Activated B cell treated with CpG ODN at 0.5 μM for 24 hours (primary cell): ENCODE measurements at regions of chr7 and their contacts with region 1.

Region 1: DNA sequence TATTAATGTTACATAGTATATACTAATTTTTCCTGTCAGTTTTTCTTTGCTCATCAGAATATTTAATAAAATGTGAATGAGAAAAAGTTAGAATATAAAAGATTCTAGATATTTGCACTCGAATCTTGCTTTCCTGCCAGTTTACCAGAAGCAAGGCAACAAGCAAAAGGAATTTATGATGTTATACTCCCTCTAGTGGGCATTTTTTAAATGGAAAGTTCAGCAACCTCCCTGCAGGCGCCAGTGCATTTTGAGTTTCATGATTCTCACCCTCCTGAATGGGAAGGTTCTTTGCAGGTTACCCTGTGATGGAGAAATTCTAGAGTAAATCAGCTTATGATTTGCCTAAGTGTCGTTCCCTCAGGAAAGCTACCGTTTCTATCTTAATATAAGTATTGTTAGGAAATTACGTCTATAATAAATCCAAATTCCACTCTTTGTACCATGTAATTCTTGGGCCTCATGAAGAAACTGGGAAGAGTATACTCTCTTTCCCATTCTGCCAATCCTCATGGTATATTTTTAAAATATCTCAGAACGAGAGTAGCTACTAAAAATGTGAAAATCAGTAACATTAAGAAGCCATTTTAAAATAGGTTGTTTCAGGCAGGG is 350.0 kb downstream of the CRPPA start:
- DNase-seq: no peak
- ATAC-seq: no peak
- H3K4me3 Mint-ChIP-seq: no peak overlapping the region
- H3K27ac Mint-ChIP-seq: no peak overlapping the region
- H3K4me1 Mint-ChIP-seq: no peaks in the 10 kb centered on the region
- H3K27me3 Mint-ChIP-seq: no peaks in the 10 kb centered on the region
- CTCF ChIP-seq: peak; percentile 75

Region 2: GRCh38 chr7:14691597-14692203 is 1379.7 kb before region 1 on chr7:
- CTCF ChIA-PET with region 1: no interaction called
- POLR2A ChIA-PET with region 1: no interaction called
- intact Hi-C with region 1: loop called (anchors 10 kb)
- DNase-seq: no peak
- ATAC-seq: peak; percentile 64
- H3K4me3 Mint-ChIP-seq: no peak overlapping the region
- H3K27ac Mint-ChIP-seq: no peak overlapping the region
- H3K4me1 Mint-ChIP-seq: no peaks in the 10 kb centered on the region
- H3K27me3 Mint-ChIP-seq: no peaks in the 10 kb centered on the region
- CTCF ChIP-seq: peak; percentile 53

Region 3: DNA sequence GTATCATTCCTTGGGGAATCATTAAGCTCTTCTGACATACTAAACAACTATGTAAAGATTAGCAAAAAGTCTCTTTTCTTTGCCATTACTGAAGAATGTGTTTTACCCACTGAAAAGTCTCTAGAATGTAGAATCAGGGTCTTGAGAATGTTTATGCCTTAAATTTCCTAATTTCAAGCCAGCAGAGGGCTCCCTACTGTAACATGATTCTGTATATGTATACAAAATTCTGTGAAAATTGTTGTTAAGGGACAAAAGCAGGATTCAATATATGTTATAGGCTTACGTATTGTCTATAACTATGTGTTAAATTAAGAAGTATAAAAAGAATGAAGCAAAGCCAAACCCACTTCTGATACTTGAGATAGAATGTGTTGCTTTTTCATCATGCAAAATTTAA is 871.9 kb before region 1 on chr7:
- CTCF ChIA-PET with region 1: no interaction called
- POLR2A ChIA-PET with region 1: no interaction called
- intact Hi-C with region 1: loop called (anchors 1 kb)
- DNase-seq: no peak
- ATAC-seq: no peak
- H3K4me3 Mint-ChIP-seq: no peak overlapping the region
- H3K27ac Mint-ChIP-seq: no peak overlapping the region
- H3K4me1 Mint-ChIP-seq: no peaks in the 10 kb centered on the region
- H3K27me3 Mint-ChIP-seq: no peaks in the 10 kb centered on the region
- CTCF ChIP-seq: no peak

Region 4: DNA sequence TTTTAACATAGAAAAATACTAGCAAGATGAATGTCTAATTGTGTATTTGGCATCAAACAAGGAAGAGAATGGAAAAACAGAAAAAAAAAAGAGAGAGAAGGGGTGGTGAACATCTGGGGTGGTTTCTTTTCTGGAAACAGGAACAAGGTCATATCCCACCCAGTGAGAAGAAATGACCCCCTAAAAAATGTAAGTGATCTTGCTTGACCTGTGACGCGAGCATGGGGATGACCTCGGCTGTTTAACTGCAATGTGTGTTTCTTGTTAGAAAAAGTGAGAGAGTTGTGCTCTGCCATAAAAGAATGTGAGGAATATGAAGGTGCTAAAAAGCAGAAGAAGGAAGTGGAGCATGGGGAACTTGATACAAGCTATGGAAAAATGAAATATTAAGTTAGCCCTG is 768.0 kb before region 1 on chr7:
- CTCF ChIA-PET with region 1: no interaction called
- POLR2A ChIA-PET with region 1: no interaction called
- intact Hi-C with region 1: loop called (anchors 5 kb)
- DNase-seq: no peak
- ATAC-seq: no peak
- H3K4me3 Mint-ChIP-seq: no peak overlapping the region
- H3K27ac Mint-ChIP-seq: no peak overlapping the region
- H3K4me1 Mint-ChIP-seq: no peaks in the 10 kb centered on the region
- H3K27me3 Mint-ChIP-seq: no peaks in the 10 kb centered on the region
- CTCF ChIP-seq: no peak

Region 5: DNA sequence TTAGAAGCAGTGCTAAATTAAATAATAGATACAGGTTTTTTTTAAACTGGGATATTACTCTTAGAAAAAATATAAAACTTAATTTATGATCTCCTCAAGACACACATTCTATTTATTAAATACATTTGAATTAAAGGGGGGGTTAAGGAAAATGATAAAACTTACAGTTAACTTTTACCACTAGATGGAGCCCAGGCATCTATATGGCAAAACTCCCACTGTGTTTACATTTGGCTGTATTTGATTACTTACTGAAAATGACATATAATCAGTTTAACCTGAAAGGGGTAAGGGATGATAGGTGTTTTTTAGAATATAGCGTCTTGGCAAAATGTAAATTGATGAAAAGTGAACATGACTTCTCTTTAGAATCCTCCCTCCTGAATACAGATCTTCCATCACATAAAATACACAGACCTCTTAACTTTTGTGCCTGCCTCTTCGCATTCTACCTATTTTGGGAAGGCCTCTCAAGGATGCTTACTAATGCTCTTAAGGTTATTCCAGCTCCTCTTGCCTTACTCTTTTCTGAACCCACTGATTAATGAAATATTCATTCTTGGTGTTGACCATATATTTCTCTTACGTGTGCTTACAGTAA is 745.2 kb before region 1 on chr7:
- CTCF ChIA-PET with region 1: no interaction called
- POLR2A ChIA-PET with region 1: no interaction called
- intact Hi-C with region 1: loop called (anchors 1 kb)
- DNase-seq: no peak
- ATAC-seq: no peak
- H3K4me3 Mint-ChIP-seq: no peak overlapping the region
- H3K27ac Mint-ChIP-seq: no peak overlapping the region
- H3K4me1 Mint-ChIP-seq: no peaks in the 10 kb centered on the region
- H3K27me3 Mint-ChIP-seq: no peaks in the 10 kb centered on the region
- CTCF ChIP-seq: no peak

Region 6: DNA sequence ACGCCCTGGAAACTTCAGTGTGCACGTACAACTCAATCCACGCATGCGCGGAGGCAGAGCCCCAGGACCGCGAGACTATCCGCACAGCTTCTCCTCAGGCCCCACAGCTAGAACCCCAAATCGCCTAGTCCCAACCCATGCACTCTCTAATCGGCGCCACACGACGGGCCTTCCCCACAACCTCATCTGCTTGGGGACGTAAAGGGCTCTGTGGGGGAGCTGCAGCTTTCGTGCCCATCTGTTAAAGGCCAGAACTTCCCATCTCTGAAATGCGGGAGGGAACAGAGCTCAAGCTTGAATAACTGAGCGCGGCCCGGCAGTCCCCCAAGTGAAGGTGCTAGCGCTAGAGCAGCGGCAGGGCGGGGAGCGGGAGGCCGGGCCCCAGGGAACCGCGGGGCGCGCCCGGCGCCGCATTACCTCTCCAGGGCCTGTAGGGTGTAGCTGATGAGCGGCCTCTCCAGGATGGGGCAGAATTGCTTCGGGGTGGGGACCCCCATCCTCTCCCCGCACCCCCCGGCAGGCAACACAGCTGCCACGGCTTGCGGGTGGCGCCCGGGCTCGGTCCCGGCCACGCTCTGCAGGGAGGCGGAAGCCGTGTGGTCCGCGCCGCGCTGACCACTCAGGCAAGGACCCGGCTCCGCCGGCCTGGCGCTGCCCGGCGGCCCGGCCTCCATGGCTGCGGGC is 349.4 kb after region 1 on chr7:
- CTCF ChIA-PET with region 1: no interaction called
- POLR2A ChIA-PET with region 1: no interaction called
- intact Hi-C with region 1: loop called (anchors 10 kb)
- DNase-seq: peak; percentile 73
- ATAC-seq: peak; percentile 90
- H3K4me3 Mint-ChIP-seq: peak overlapping the region; percentile 93
- H3K27ac Mint-ChIP-seq: peak overlapping the region; percentile 95
- H3K4me1 Mint-ChIP-seq: peaks cover 22% of the 10 kb centered on the region
- H3K27me3 Mint-ChIP-seq: no peaks in the 10 kb centered on the region
- CTCF ChIP-seq: no peak

Region 7: GRCh38 chr7:17448486-17449423 is 1377.4 kb after region 1 on chr7:
- CTCF ChIA-PET with region 1: no interaction called
- POLR2A ChIA-PET with region 1: no interaction called
- intact Hi-C with region 1: no loop called
- DNase-seq: no peak
- ATAC-seq: no peak
- H3K4me3 Mint-ChIP-seq: no peak overlapping the region
- H3K27ac Mint-ChIP-seq: no peak overlapping the region
- H3K4me1 Mint-ChIP-seq: no peaks in the 10 kb centered on the region
- H3K27me3 Mint-ChIP-seq: no peaks in the 10 kb centered on the region
- CTCF ChIP-seq: no peak